ENCODE measurements at regions of chr18 and their contacts with region 1.

Region 1: DNA sequence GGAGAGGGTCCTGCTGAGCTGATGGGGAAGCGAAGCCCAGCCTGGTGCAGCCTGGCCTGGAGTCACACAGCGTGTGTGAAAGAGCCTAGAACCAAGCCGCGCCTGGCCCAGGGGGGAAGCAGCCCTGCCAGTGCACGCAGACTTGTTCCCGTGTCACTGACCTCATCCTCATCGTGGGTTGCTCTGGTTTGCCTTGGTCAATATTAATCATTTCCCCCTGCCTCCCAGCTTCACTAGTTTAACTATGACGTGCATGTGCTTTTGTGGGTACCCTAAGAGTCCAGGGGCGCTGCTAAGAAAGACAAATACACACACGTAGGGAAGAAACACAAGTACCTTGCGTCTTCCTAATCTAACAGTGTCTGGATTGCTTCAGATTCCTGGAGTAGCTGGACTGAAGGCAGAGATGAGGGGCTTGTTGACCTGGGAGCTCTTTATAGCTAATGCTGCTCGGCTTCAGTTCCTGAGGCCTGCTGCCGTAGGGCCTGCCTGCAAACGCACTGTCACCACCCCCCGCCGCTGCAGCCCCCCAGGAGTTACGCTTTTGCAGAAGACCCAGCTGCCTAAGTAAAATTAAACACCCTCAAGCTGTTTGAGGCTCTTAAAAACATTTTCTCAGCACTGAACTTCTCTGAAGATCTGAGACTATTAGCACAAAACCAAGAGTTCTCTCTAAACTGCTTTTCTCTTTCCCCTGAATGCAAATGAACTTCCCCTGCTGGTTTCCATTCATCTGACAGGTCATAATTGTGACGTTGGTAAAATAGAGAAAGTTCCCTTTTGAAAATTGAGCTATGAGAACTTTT is 159.2 kb downstream of the FAM210A start:
- DNase-seq: peak; percentile 65
- H3K4me3 Mint-ChIP-seq: peak overlapping the region; percentile 60
- H3K27ac Mint-ChIP-seq: peak overlapping the region; percentile 89
- H3K4me1 Mint-ChIP-seq: peaks cover 74% of the 10 kb centered on the region
- H3K27me3 Mint-ChIP-seq: no peaks in the 10 kb centered on the region

Region 2: GRCh38 chr18:13577091-13577697 is 10.1 kb after region 1 on chr18:
- CTCF ChIA-PET with region 1: interaction called, 10 read pairs
- POLR2A ChIA-PET with region 1: interaction called, 15 read pairs
- intact Hi-C with region 1: loop called (anchors 1 kb)
- DNase-seq: peak; percentile 70
- H3K4me3 Mint-ChIP-seq: peak overlapping the region; percentile 31
- H3K27ac Mint-ChIP-seq: peak overlapping the region; percentile 52
- H3K4me1 Mint-ChIP-seq: peaks cover 45% of the 10 kb centered on the region
- H3K27me3 Mint-ChIP-seq: no peaks in the 10 kb centered on the region